Right ventricle myocardium inferior (tissue), 1 donor: ENCODE measurements at regions of chr18 and their contacts with region 1.

Region 1: GRCh38 chr18:34880882-34881834 is 160.1 kb upstream of the MAPRE2 start:
- DNase-seq: no peak
- ATAC-seq: peak; percentile 78

Region 2: GRCh38 chr18:34840256-34840815 is 40.8 kb before region 1 on chr18:
- intact Hi-C with region 1: no loop called
- DNase-seq: no peak
- ATAC-seq: no peak

Region 3: GRCh38 chr18:34976899-34977837 is 96.0 kb after region 1 on chr18:
- intact Hi-C with region 1: loop called (anchors 5 kb)
- DNase-seq: peak; percentile 85
- ATAC-seq: peak; percentile 82